Dorsolateral prefrontal cortex (tissue), 120 donors: ENCODE measurements at regions of chr16 and their contacts with region 1.

Region 1: DNA sequence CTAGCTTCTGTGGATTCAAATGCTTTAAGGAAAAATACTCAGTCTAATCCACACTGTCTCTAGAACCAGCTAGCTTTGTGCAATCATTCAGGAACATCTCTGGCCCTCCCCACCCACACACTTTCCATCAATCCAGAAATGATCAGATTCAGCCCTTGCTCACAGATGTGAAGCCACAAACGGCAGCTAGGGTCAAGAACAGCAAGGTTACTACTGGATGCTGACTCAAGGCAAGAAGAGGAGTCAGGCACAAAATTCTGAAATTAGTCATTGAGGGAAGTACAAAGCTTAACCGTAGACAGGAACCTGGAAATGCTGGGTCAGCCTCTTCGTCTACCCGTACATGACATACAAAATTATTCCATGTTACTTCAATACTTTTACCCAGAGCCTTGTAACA is 174.6 kb downstream of the CDH13 start:
- DNase-seq: no peak
- H3K4me3 ChIP-seq: no peak overlapping the region
- H3K27ac ChIP-seq: no peak overlapping the region
- H3K27me3 ChIP-seq: no peaks in the 10 kb centered on the region
- CTCF ChIP-seq: no peak

Region 2: DNA sequence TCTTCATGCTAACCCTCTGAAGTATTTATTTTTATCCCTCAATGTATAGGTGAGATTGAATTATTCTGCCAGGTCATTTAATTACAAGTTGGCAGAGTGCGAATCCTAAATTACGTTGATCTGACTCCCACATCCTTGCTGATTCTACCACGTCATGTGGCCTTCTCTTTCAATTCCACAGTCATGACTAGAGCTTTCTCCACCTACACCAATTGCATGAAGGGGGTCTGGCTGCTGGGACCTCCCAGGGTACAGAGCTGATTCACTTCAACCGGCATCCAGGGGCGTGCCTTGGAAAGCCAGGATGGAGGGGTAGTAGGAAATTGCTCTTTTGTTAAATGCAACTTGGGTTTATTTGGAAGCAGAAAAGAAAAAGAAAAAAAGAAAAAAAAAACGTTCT is 215.7 kb before region 1 on chr16:
- intact Hi-C with region 1: no loop called
- DNase-seq: no peak
- H3K4me3 ChIP-seq: no peak overlapping the region
- H3K27ac ChIP-seq: no peak overlapping the region
- H3K27me3 ChIP-seq: no peaks in the 10 kb centered on the region
- CTCF ChIP-seq: no peak

Region 3: DNA sequence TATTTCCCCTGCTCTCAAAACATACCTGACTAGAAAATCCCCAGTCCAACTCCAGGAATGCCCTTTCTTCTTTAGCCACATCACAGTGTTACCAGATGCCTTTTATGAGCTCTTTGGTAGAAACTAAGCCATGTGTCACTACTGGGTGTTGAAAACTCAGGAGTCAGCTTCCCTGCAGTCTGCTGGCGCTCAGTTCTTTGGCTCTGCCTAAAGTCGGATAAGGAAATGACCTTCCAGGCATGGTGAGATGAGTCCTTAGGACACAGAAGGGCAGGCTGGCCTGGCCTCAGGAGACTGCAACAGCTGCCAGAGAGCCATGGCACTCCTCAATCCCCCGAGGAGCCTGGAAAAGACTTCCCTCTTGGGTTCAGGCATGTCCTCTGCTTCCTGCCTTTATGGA is 85.5 kb before region 1 on chr16:
- intact Hi-C with region 1: loop called in 1 of 2 experiments (anchors 10 kb)
- DNase-seq: no peak
- H3K4me3 ChIP-seq: no peak overlapping the region
- H3K27ac ChIP-seq: no peak overlapping the region
- H3K27me3 ChIP-seq: no peaks in the 10 kb centered on the region
- CTCF ChIP-seq: no peak

Region 4: DNA sequence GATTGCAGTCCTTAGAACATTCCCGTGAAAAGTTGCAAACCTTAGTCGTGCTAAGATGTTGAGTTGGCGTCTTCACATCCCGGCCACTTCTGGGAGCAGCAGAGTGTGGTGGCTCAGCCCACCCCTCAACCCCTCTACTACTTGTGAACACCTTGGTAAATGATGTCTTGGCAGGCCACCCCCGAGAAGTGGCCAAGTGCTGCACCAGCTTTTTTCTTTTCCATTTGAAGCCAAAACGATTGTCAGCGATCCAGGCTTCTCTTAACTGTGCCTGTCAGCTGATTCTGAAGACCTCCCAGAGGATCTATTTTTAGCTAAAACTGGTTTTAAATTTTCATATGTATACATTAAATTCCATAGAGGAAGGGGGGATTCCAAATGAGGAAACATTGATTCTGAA is 72.9 kb after region 1 on chr16:
- intact Hi-C with region 1: no loop called
- DNase-seq: no peak
- H3K4me3 ChIP-seq: no peak overlapping the region
- H3K27ac ChIP-seq: no peak overlapping the region
- H3K27me3 ChIP-seq: no peaks in the 10 kb centered on the region
- CTCF ChIP-seq: no peak